Activated T-helper 2 cell treated with anti-CD3 and anti-CD28 coated beads, Interferon-gamma antibody, Interleukin-2, Interleukin-4, amounts not matched to agents 10 μg/mL and 5 μg/mL and 100 μg/mL, durations not matched to agents 14 hours and 24 hours and 36 hours (primary cell): ENCODE measurements at regions of chr1 and their contacts with region 1.

Region 1: DNA sequence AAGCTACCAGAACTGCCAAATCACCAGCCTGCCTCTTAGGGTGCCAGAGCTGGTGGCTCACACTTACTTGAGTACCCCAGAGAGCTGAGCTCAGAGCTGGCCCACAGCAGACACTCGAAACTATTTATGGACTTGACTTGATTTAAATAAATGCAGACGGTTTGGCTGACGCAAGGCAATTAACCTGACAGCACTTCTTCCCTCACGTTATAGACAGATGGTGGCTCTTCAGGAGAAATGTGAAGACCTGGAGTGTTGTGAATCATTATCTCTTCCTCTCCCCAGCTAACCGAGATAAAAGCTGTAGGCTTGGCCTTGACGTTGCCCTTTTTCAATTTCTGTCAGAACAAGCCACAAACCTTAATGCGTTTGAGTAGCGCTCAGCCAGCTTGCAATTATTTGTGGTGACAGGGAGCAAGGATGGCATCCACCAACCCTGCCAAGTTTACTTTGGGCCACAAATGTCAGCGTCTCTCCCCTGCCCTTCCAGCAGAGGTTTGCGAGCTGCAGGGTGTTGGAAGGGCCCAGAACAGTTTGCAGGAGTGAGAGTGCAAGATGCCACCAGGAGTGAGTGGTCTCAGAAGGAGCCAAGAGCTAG is 34.0 kb upstream of the BCAR3 start:
- DNase-seq: peak; percentile 48
- H3K4me3 Mint-ChIP-seq: peak overlapping the region; percentile 47
- H3K27ac Mint-ChIP-seq: peak overlapping the region; percentile 78
- H3K4me1 Mint-ChIP-seq: peaks cover 61% of the 10 kb centered on the region
- H3K27me3 Mint-ChIP-seq: no peaks in the 10 kb centered on the region

Region 2: DNA sequence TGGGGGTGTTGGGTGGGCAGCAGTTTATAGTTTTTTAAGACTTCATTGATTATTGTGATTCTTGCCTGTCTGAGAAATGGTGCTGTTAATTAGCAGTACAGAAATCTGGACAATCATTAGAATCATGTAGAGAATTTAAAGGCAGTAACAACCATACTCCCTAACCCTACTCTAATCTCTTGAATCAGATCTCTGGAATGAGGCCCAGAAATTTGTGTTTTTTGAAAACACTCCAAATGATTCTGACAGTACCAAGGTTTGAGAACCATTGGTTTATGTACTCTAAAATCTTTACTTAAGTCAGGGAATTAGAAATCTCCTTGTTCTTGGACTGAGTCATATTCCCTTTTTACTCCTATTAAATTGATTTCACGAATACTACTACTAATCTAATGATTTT is 243.7 kb before region 1 on chr1:
- intact Hi-C with region 1: no loop called
- DNase-seq: no peak
- H3K4me3 Mint-ChIP-seq: no peak overlapping the region
- H3K27ac Mint-ChIP-seq: no peak overlapping the region
- H3K4me1 Mint-ChIP-seq: no peaks in the 10 kb centered on the region
- H3K27me3 Mint-ChIP-seq: peaks cover 10% of the 10 kb centered on the region

Region 3: GRCh38 chr1:93680757-93681550 is 34.7 kb before region 1 on chr1:
- intact Hi-C with region 1: loop called (anchors 1 kb)
- DNase-seq: peak; percentile 46
- H3K4me3 Mint-ChIP-seq: peak overlapping the region; percentile 94
- H3K27ac Mint-ChIP-seq: peak overlapping the region; percentile 84
- H3K4me1 Mint-ChIP-seq: peaks cover 38% of the 10 kb centered on the region
- H3K27me3 Mint-ChIP-seq: peaks cover 31% of the 10 kb centered on the region

Region 4: GRCh38 chr1:93758842-93759515 is 43.4 kb after region 1 on chr1:
- intact Hi-C with region 1: loop called (anchors 2 kb)
- DNase-seq: peak; percentile 34
- H3K4me3 Mint-ChIP-seq: no peak overlapping the region
- H3K27ac Mint-ChIP-seq: peak overlapping the region; percentile 73
- H3K4me1 Mint-ChIP-seq: peaks cover 51% of the 10 kb centered on the region
- H3K27me3 Mint-ChIP-seq: no peaks in the 10 kb centered on the region